Activated CD4-positive, alpha-beta memory T cell treated with anti-CD3 and anti-CD28 coated beads, Interleukin-2, amount 10 ng/mL, durations not matched to agents 7 days and 5 days (primary cell): ENCODE measurements at regions of chr1 and their contacts with region 1.

Region 1: GRCh38 chr1:23118957-23119792 is 49.5 kb downstream of the LUZP1 start:
- DNase-seq: peak; percentile 68
- H3K4me3 Mint-ChIP-seq: peak overlapping the region; percentile 63
- H3K27ac Mint-ChIP-seq: peak overlapping the region; percentile 89
- H3K4me1 Mint-ChIP-seq: peaks cover 57% of the 10 kb centered on the region
- H3K27me3 Mint-ChIP-seq: no peaks in the 10 kb centered on the region

Region 2: DNA sequence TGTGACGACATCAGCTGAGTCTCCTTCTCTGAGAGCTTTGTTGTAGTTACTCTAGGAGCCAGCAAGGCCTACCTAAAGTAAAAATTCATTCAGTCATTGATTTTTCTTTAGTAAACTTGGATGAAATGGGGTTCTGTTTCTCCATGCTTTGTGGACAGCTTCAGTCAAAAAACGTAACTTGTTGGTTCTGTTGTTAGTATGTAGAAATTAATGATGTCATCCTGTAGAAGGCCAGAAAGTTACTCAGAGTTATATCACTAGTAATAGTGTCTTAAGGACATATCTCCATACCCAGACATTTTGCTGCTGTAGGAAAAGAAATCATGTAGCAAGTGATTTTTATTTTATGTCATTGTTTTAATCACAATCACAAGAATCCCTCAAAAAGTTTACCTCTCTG is 56.9 kb before region 1 on chr1:
- CTCF ChIA-PET with region 1: no interaction called
- POLR2A ChIA-PET with region 1: no interaction called
- DNase-seq: no peak
- H3K4me3 Mint-ChIP-seq: no peak overlapping the region
- H3K27ac Mint-ChIP-seq: no peak overlapping the region
- H3K4me1 Mint-ChIP-seq: no peaks in the 10 kb centered on the region
- H3K27me3 Mint-ChIP-seq: no peaks in the 10 kb centered on the region

Region 3: GRCh38 chr1:23108918-23109533 is 10.1 kb before region 1 on chr1:
- CTCF ChIA-PET with region 1: interaction called, 17 read pairs
- POLR2A ChIA-PET with region 1: interaction called, 29 read pairs
- DNase-seq: peak; percentile 29
- H3K4me3 Mint-ChIP-seq: no peak overlapping the region
- H3K27ac Mint-ChIP-seq: no peak overlapping the region
- H3K4me1 Mint-ChIP-seq: peaks cover 63% of the 10 kb centered on the region
- H3K27me3 Mint-ChIP-seq: no peaks in the 10 kb centered on the region

Region 4: DNA sequence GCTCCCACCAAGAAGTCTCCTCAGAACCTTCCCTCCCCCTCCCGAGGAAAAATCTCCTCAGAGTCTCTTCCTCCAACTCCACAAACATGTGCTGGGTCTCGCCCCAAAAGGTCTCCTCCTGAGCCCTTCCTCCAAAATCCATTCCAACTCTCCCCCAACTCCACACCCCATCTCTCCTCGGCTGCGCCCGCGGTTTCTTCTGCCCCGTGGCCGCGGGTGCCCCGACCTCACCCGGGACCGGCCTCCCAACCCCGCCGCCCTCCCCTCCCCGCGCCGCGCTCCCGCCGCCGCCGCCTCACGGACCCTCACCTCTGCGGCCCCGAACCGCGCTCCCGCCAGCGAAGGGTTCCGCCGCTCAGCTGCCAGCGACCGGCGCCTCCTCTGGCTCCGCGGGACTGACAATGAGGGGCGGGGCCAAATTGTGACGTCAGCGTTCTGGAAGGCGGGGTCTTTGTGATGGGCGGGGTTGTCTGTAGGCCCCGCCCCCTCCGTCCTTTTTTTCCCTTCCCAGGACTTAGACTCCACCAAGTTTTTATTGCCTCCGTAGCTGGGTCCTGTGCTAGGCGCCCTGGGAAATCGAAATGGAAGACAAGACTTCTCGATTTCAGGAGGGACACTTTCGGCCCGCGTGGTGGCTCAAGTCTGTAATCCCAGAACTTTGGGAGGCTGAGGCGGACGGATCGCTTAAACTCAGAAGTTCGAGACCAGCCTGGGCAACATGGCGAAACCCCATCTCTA is 49.5 kb after region 1 on chr1 and contains the start of gene LUZP1:
- CTCF ChIA-PET with region 1: no interaction called
- POLR2A ChIA-PET with region 1: interaction called, 12 read pairs
- DNase-seq: peak; percentile 88
- H3K4me3 Mint-ChIP-seq: peak within 1 kb of the TSS; percentile 91
- H3K27ac Mint-ChIP-seq: peak within 1 kb of the TSS; percentile 74
- H3K4me1 Mint-ChIP-seq: peaks cover 28% of the 10 kb centered on the region
- H3K27me3 Mint-ChIP-seq: peaks cover 2% of the 10 kb centered on the region
- total RNA-seq, gene LUZP1: 19.4 to 21.8 TPM